ENCODE measurements at regions of chr9 and their contacts with region 1.

Region 1: GRCh38 chr9:22008736-22009562 is at the start of gene CDKN2B:
- DNase-seq: peak; percentile 76
- ATAC-seq: peak; percentile 84
- H3K4me3 Mint-ChIP-seq: peak within 1 kb of the TSS; percentile 82
- H3K27ac Mint-ChIP-seq: no peak within 1 kb of the TSS
- H3K4me1 Mint-ChIP-seq: peaks cover 37% of the 10 kb centered on the region
- H3K27me3 Mint-ChIP-seq: peaks cover 56% of the 10 kb centered on the region
- total RNA-seq, gene CDKN2B: 2.3 to 3.1 TPM

Region 2: DNA sequence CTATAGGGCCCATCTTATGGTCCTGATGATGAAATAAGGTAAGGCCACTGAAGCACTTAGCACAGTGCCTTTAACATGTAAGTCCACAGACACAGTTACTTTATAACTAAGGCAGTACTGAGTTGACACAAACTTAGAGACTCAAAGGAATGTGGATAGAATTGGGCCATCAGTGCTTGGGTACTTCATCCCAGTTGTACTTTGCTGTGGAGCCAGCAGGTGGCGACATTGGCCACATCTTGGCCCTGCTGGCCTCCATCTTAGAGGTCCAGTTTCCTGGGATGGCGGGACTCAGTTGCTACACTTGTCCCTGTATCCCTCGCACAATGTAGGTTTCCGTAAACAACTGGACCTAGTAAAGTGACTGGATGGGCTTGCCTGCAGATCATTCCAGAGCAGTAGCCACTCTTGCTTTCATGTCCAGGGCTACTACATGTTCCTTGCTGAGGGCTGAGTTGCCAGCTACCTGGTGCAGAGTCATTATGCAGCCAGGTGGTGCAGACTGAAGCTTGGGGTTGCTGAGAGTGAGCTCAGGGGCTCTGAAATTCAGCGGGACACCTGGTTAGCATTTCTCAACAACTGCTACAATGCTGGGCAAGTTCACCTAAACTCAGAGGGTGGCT is 195.9 kb before region 1 on chr9:
- CTCF ChIA-PET with region 1: interaction called, 87 read pairs
- POLR2A ChIA-PET with region 1: no interaction called
- DNase-seq: peak; percentile 78
- ATAC-seq: peak; percentile 78
- H3K4me3 Mint-ChIP-seq: no peak overlapping the region
- H3K27ac Mint-ChIP-seq: no peak overlapping the region
- H3K4me1 Mint-ChIP-seq: peaks cover 32% of the 10 kb centered on the region
- H3K27me3 Mint-ChIP-seq: no peaks in the 10 kb centered on the region

Region 3: GRCh38 chr9:21974548-21975409 is 34.2 kb before region 1 on chr9:
- CTCF ChIA-PET with region 1: interaction called, 27 read pairs
- POLR2A ChIA-PET with region 1: no interaction called
- DNase-seq: peak; percentile 67
- ATAC-seq: peak; percentile 80
- H3K4me3 Mint-ChIP-seq: peak overlapping the region; percentile 70
- H3K27ac Mint-ChIP-seq: no peak overlapping the region
- H3K4me1 Mint-ChIP-seq: peaks cover 36% of the 10 kb centered on the region
- H3K27me3 Mint-ChIP-seq: peaks cover 85% of the 10 kb centered on the region

Region 4: GRCh38 chr9:21995177-21996086 is 13.5 kb before region 1 on chr9:
- CTCF ChIA-PET with region 1: interaction called, 40 read pairs
- POLR2A ChIA-PET with region 1: no interaction called
- DNase-seq: peak; percentile 93
- ATAC-seq: peak; percentile 82
- H3K4me3 Mint-ChIP-seq: peak overlapping the region; percentile 94
- H3K27ac Mint-ChIP-seq: peak overlapping the region; percentile 97
- H3K4me1 Mint-ChIP-seq: peaks cover 32% of the 10 kb centered on the region
- H3K27me3 Mint-ChIP-seq: peaks cover 19% of the 10 kb centered on the region

Region 5: GRCh38 chr9:22030101-22030598 is 21.2 kb after region 1 on chr9:
- CTCF ChIA-PET with region 1: interaction called, 95 read pairs
- POLR2A ChIA-PET with region 1: no interaction called
- DNase-seq: no peak
- ATAC-seq: no peak
- H3K4me3 Mint-ChIP-seq: no peak overlapping the region
- H3K27ac Mint-ChIP-seq: no peak overlapping the region
- H3K4me1 Mint-ChIP-seq: peaks cover 18% of the 10 kb centered on the region
- H3K27me3 Mint-ChIP-seq: peaks cover 9% of the 10 kb centered on the region

Region 6: DNA sequence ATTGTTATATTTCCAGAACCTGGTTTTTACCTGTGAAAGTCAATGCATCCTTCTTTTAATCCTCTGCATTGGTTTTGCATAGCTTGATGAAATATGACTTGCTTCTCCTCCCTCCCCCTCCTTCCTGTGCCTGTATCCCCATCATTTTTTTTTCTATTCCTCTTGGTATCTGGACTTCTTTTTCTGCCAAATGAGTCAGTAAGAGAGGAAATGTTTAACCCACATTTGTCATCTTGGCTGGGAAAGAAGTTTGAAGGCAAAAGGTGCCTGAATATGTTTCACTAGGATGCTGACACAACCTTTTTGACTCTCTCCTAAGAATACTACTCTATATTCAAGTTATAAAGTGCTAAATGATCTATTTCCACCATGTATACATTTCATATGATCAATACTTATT is 35.6 kb after region 1 on chr9:
- CTCF ChIA-PET with region 1: interaction called, 95 read pairs
- POLR2A ChIA-PET with region 1: no interaction called
- DNase-seq: no peak
- ATAC-seq: no peak
- H3K4me3 Mint-ChIP-seq: no peak overlapping the region
- H3K27ac Mint-ChIP-seq: no peak overlapping the region
- H3K4me1 Mint-ChIP-seq: peaks cover 72% of the 10 kb centered on the region
- H3K27me3 Mint-ChIP-seq: peaks cover 21% of the 10 kb centered on the region

Region 7: GRCh38 chr9:22060831-22061383 is 52.0 kb after region 1 on chr9:
- CTCF ChIA-PET with region 1: interaction called, 19 read pairs
- POLR2A ChIA-PET with region 1: no interaction called
- DNase-seq: no peak
- ATAC-seq: no peak
- H3K4me3 Mint-ChIP-seq: no peak overlapping the region
- H3K27ac Mint-ChIP-seq: no peak overlapping the region
- H3K4me1 Mint-ChIP-seq: peaks cover 41% of the 10 kb centered on the region
- H3K27me3 Mint-ChIP-seq: no peaks in the 10 kb centered on the region

Measured in activated CD8-positive, alpha-beta T cell treated with anti-CD3 and anti-CD28 coated beads, Interleukin-2, amount 10 ng/mL, durations not matched to agents 7 days and 5 days (primary cell).